ENCODE measurements at regions of chr3 and their contacts with region 1.

Region 1: DNA sequence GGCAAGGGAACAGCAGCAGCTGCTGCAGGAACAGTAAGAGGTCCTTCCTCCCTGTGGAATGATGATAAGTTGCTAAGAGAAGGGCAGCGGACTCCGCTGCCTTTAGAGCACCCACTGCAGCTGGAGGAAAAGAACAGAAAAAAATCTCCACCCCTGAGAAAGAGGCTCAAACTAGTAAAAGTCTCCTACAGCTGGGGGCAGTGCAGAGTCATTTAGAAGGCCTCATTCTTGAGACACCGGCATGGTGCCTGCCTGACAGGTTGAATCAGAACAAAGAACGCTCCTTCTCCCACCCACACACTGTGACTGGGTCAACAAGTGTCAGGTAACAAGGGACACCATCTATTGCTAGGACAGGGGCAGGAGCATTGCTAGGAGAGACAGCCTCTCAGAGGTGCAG is 188.4 kb downstream of the ABHD5 start:
- DNase-seq: peak in 1 of 2 donors; percentile 21
- H3K4me3 ChIP-seq: no peak overlapping the region
- H3K27ac ChIP-seq: no peak overlapping the region
- H3K4me1 ChIP-seq: peaks cover 0 to 6% of the 10 kb centered on the region in 2 donors
- H3K27me3 ChIP-seq: no peaks in the 10 kb centered on the region
- CTCF ChIP-seq: no peak

Region 2: GRCh38 chr3:42979044-42979972 is 899.9 kb before region 1 on chr3 and contains the start of gene GASK1A:
- intact Hi-C with region 1: loop called (anchors 10 kb)
- DNase-seq: peak in 1 of 2 donors; percentile 76
- H3K4me3 ChIP-seq: peak within 1 kb of the TSS; percentile 78 to 83
- H3K27ac ChIP-seq: peak within 1 kb of the TSS in 1 of 2 donors; percentile 31
- H3K4me1 ChIP-seq: peaks cover 0 to 9% of the 10 kb centered on the region in 2 donors
- H3K27me3 ChIP-seq: no peaks in the 10 kb centered on the region
- CTCF ChIP-seq: no peak
- total RNA-seq, gene GASK1A: 25.8 TPM

Region 3: DNA sequence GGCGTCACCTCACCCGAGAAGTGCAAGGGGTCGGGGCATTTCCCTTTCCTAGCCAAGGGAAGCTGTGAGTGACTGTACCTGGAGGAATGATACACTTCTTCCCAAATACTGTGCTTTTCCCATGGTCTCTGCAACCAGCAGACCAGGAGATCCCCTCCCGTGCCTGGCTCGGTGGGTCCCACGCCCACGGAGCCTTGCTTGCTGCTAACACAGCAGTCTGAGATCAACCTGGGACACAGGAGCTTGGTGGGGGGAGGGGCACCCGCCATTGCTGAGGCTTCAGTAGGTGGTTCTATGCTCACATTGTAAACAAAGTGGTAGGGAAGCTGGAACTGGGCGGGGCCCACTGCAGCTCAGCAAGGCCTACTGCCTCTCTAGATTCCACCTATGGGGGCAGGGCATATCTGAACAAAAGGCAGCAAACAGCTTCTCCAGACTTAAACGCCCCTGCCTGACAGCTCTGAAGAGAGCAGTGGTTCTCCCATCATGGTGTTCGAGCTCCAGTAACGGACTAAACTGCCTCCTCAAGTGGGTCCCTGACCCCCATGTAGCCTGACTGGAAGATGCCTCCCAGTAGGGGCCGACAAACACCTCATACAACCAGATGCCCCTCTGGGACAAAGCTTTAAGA is 219.8 kb before region 1 on chr3:
- intact Hi-C with region 1: no loop called
- DNase-seq: no peak
- H3K4me3 ChIP-seq: no peak overlapping the region
- H3K27ac ChIP-seq: no peak overlapping the region
- H3K4me1 ChIP-seq: no peaks in the 10 kb centered on the region
- H3K27me3 ChIP-seq: no peaks in the 10 kb centered on the region
- CTCF ChIP-seq: no peak

Region 4: DNA sequence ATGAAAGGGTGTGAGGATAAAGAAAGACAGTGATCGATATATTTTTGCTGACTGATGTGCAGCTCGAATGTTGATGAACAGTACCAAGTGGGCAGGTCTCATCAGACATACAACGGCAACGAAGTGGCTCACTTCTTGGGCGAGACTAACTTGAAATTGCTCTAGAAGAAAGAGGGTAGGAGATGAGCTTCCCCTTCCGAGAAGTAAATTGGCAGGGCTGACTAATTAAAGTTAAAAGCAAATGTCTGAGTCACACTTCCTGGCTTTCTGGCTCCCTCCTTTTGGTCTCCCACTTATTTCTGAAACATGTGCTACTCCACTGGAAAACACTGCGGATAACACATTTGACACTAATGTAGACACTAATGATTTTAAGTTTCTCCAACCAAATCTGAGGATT is 39.9 kb after region 1 on chr3:
- intact Hi-C with region 1: no loop called
- DNase-seq: no peak
- H3K4me3 ChIP-seq: no peak overlapping the region
- H3K27ac ChIP-seq: no peak overlapping the region
- H3K4me1 ChIP-seq: no peaks in the 10 kb centered on the region
- H3K27me3 ChIP-seq: no peaks in the 10 kb centered on the region
- CTCF ChIP-seq: no peak

Measured in ascending aorta (tissue), 2 donors.